Natural killer cell (primary cell): ENCODE measurements at regions of chr1 and their contacts with region 1.

Region 1: DNA sequence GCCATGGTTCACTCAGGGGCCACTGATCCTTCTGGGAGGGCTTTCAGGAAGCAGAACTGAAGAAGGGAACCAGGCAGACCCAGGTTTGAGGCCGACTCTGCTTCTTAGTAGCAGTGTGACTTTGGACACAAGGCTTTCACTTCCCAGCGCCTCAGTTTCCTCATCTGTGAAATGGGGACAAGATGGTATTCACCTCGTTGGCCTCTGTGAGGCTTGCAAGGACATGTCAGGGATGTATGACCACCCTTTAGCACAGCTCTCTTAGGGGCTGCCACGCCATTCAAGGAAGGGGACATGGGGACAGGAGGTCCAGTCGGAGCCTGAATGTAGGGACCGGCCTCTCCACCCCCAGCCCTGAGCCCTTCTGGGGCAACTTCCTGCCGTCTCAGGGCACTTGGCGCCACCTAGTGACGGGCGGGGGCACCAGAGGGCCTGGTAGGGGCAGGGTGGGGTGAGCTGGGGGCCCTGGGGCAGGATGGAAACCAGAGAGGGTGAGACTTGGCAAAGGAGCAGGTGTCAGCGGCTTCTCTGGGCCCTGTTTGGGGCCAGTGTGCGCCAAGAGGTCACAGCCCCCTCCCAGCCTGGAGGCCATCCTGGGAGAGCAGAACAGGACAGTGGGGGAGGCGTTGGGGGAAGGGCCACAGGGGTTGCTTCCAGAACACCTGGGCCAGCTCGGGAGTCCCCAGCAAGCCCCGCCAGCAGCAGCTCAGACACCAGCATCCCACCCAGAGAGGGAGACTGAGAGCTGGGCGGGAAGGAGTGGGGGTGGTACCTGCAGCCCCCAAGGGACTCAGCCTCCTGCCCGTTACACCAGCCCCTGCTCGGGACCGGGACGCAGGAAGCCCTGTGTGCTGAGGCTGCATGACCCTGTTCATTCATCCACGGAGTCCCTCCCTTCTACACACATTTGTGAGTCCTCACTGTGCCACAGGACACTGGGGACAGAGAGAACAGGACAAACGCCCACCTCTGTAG is 102.5 kb upstream of the TARDBP start:
- DNase-seq: peak; percentile 79 to 83
- ATAC-seq: peak; percentile 79 to 94 (median 91)
- H3K4me3 ChIP-seq: no peak overlapping the region
- H3K4me3 Mint-ChIP-seq: no peak overlapping the region
- H3K27ac ChIP-seq: no peak overlapping the region
- H3K27ac Mint-ChIP-seq: no peak overlapping the region
- H3K4me1 ChIP-seq: peaks cover 39% of the 10 kb centered on the region
- H3K4me1 Mint-ChIP-seq: peaks cover 3 to 24% of the 10 kb centered on the region in 2 donors
- H3K27me3 ChIP-seq: no peaks in the 10 kb centered on the region
- H3K27me3 Mint-ChIP-seq: no peaks in the 10 kb centered on the region
- CTCF ChIP-seq: peak; percentile 73

Region 2: DNA sequence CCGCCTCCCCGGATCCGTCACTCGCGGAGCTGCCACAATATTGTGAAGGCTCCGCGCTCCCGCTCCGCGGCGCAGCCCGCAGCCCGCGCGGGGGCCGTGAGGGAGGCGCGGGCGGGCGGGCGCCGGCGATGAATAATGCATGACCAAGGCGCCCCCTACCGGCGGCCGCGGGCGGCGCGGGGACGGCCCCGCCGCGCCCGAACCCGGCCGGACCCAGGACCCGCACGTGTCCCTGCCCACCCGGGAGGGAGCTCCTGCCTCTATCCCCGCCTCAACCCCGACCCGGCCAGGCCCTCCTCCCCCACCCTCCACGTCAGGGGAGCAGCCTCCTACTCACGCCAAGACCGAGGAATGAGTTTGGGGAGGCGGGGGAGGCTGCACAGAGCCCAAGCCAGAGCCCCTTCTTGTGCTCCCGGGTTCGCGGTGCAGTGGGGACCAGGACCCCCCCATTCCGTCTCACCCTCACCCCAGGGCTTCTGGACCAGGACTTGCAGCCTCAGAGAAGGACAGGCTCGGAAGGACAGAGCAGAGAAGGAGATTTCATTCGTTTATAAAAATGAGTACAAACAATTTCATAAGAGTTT is 42.8 kb before region 1 on chr1:
- intact Hi-C with region 1: loop called (anchors 5 kb)
- DNase-seq: peak; percentile 75 to 77
- ATAC-seq: peak; percentile 79 to 95 (median 92)
- H3K4me3 ChIP-seq: no peak overlapping the region
- H3K4me3 Mint-ChIP-seq: peak overlapping the region; percentile 61
- H3K27ac ChIP-seq: no peak overlapping the region
- H3K27ac Mint-ChIP-seq: no peak overlapping the region
- H3K4me1 ChIP-seq: peaks cover 13% of the 10 kb centered on the region
- H3K4me1 Mint-ChIP-seq: peaks cover 5 to 16% of the 10 kb centered on the region in 2 donors
- H3K27me3 ChIP-seq: peaks cover 32% of the 10 kb centered on the region
- H3K27me3 Mint-ChIP-seq: peaks cover 48 to 56% of the 10 kb centered on the region in 2 donors
- CTCF ChIP-seq: peak; percentile 86

Region 3: GRCh38 chr1:10975567-10976326 is 65.8 kb after region 1 on chr1:
- intact Hi-C with region 1: no loop called
- DNase-seq: no peak
- ATAC-seq: no peak
- H3K4me3 ChIP-seq: no peak overlapping the region
- H3K4me3 Mint-ChIP-seq: no peak overlapping the region
- H3K27ac ChIP-seq: no peak overlapping the region
- H3K27ac Mint-ChIP-seq: no peak overlapping the region
- H3K4me1 ChIP-seq: no peaks in the 10 kb centered on the region
- H3K4me1 Mint-ChIP-seq: no peaks in the 10 kb centered on the region
- H3K27me3 ChIP-seq: peaks cover 5% of the 10 kb centered on the region
- H3K27me3 Mint-ChIP-seq: peaks cover 10 to 15% of the 10 kb centered on the region in 2 donors
- CTCF ChIP-seq: no peak